ENCODE measurements at regions of chr18 and their contacts with region 1.

Region 1: GRCh38 chr18:56650944-56651770 is at the start of gene WDR7:
- DNase-seq: peak; percentile 82 to 98 (median 93)
- ATAC-seq: peak; percentile 94 to 96
- H3K4me3 Mint-ChIP-seq: peak within 1 kb of the TSS; percentile 89 to 99 (median 94)
- H3K27ac Mint-ChIP-seq: peak within 1 kb of the TSS; percentile 92 to 98 (median 96)
- H3K4me1 Mint-ChIP-seq: peaks cover 24 to 66% (median 52%) of the 10 kb centered on the region in 4 donors
- H3K27me3 Mint-ChIP-seq: no peaks in the 10 kb centered on the region
- polyA plus RNA-seq, gene WDR7: 17.8 to 27.1 (median 21.8) TPM

Region 2: GRCh38 chr18:56563568-56563967 is 87.6 kb before region 1 on chr18:
- POLR2A ChIA-PET with region 1: no interaction called
- DNase-seq: no peak
- ATAC-seq: no peak
- H3K4me3 Mint-ChIP-seq: no peak overlapping the region
- H3K27ac Mint-ChIP-seq: no peak overlapping the region
- H3K4me1 Mint-ChIP-seq: no peaks in the 10 kb centered on the region
- H3K27me3 Mint-ChIP-seq: peaks cover 0 to 8% (median 0%) of the 10 kb centered on the region in 5 donors

Region 3: GRCh38 chr18:56638271-56639093 is 12.7 kb before region 1 on chr18 and contains the start of gene TXNL1:
- POLR2A ChIA-PET with region 1: interaction called, 38 read pairs
- DNase-seq: peak; percentile 94 to 100 (median 98)
- ATAC-seq: peak; percentile 94 to 96
- H3K4me3 Mint-ChIP-seq: peak within 1 kb of the TSS; percentile 96 to 100 (median 98)
- H3K27ac Mint-ChIP-seq: peak within 1 kb of the TSS; percentile 93 to 100 (median 99)
- H3K4me1 Mint-ChIP-seq: peaks cover 22 to 53% (median 49%) of the 10 kb centered on the region in 4 donors
- H3K27me3 Mint-ChIP-seq: peaks cover 0 to 4% (median 0%) of the 10 kb centered on the region in 5 donors
- polyA plus RNA-seq, gene TXNL1: 48.1 to 50.3 (median 49.1) TPM

Region 4: DNA sequence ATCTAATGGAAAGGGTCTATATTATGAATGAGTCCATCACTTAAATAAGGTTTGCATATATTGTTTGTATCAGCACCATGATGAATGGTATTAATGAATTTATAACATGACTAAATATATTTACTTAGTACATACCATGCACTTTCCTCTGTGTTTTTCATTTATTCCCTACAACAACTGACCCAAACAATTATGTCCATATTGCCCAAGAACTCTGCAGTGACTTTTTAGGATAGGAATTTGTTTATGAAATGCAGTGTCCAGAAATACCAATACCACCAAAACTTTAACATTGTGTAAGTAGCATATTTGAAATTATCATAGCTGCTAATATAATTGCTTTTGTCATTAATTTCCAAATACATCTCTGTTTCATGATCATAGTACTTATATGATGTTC is 119.7 kb after region 1 on chr18:
- POLR2A ChIA-PET with region 1: no interaction called
- DNase-seq: no peak
- ATAC-seq: no peak
- H3K4me3 Mint-ChIP-seq: no peak overlapping the region
- H3K27ac Mint-ChIP-seq: peak overlapping the region in 1 of 10 donors; percentile 6
- H3K4me1 Mint-ChIP-seq: peaks cover 0 to 4% (median 1%) of the 10 kb centered on the region in 4 donors
- H3K27me3 Mint-ChIP-seq: no peaks in the 10 kb centered on the region

Measured in naive thymus-derived CD8-positive, alpha-beta T cell (primary cell).